ENCODE measurements at regions of chr13 and their contacts with region 1.

Region 1: GRCh38 chr13:42271337-42272114 is 426 bp upstream of the AKAP11 start:
- DNase-seq: peak; percentile 95
- H3K4me3 Mint-ChIP-seq: peak overlapping the region; percentile 94
- H3K27ac Mint-ChIP-seq: peak overlapping the region; percentile 88
- H3K4me1 Mint-ChIP-seq: peaks cover 46% of the 10 kb centered on the region
- H3K27me3 Mint-ChIP-seq: no peaks in the 10 kb centered on the region

Region 2: DNA sequence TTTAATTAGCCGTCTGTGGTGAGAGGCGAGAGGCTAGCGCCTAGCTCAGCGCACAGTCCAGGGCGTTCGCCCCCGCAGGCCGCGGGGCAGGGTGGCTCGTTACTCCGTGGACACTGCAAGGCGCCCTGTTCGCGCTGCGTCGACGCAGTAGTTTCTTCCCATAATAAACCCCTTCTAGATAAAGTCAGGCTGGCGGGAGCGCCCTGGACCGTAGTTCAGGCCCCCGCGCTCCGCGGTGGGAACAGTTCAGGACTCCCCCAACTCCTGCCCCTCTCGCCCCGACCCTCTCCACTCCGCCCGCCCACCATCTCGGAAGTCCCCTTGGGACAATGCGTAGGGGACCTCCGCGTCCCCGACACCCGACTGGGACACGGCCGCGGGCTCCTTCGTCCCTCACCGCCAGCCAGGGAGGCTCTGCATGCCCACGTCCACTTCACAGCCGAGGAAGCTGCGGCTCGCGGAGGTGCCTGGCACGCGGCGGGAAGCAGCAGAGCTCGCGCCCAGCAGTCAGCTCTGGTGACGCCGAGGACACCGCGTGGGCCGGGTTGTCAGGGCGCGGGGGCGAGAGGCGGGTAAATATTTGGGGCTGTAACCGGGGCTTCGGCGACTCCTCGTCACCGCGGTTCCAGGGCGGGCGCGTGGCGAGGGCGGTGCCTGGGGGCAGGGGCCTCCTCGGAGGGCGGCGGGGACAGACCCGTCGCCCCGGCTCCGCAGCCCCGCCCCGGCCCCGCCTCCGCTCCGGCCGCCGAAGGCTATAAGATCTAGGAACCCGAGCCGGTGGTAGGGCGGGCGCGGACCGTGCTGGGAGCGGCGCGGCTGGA is 814.5 kb before region 1 on chr13 and contains the start of gene RGCC:
- CTCF ChIA-PET with region 1: no interaction called
- intact Hi-C with region 1: loop called (anchors 2 kb)
- DNase-seq: peak; percentile 94
- H3K4me3 Mint-ChIP-seq: peak within 1 kb of the TSS; percentile 85
- H3K27ac Mint-ChIP-seq: peak within 1 kb of the TSS; percentile 96
- H3K4me1 Mint-ChIP-seq: peaks cover 26% of the 10 kb centered on the region
- H3K27me3 Mint-ChIP-seq: peaks cover 8% of the 10 kb centered on the region
- total RNA-seq, gene RGCC: 75.0 to 77.8 TPM

Region 3: GRCh38 chr13:42328672-42329071 is 57.1 kb after region 1 on chr13:
- CTCF ChIA-PET with region 1: no interaction called
- intact Hi-C with region 1: loop called (anchors 2 kb)
- DNase-seq: no peak
- H3K4me3 Mint-ChIP-seq: no peak overlapping the region
- H3K27ac Mint-ChIP-seq: peak overlapping the region; percentile 10
- H3K4me1 Mint-ChIP-seq: peaks cover 21% of the 10 kb centered on the region
- H3K27me3 Mint-ChIP-seq: no peaks in the 10 kb centered on the region

Region 4: DNA sequence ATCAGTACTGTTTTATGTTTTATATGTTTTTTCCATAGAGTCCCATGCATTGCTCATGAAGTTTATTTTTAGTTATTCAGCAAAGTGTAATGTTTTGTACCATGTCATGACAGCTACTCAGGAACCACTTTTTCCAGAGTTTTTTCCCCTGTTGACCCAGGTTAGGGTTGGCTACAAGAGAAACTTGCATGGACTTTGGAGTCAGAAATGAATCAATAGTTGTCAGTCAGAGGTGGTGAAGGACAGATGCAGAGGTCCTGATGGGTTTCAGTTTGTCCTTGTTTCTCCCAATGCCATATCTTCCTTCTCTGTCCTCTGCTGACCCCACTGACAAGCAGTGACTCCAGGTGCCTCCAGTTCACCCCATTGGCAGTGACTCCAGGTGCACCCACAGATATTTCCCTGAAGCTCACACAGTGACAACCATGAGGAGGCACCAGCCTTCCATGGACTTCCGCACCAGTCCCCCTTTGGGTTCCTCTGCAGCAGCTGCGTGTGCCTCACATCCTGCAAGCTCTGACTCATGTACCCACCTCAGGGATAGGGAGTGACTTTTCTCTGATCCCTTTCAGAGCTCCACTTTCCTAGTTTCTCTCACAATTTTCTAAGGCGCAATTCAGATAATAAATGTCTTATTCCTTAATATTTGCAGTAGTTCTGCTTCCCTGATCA is 92.6 kb after region 1 on chr13:
- CTCF ChIA-PET with region 1: no interaction called
- intact Hi-C with region 1: no loop called
- DNase-seq: no peak
- H3K4me3 Mint-ChIP-seq: no peak overlapping the region
- H3K27ac Mint-ChIP-seq: no peak overlapping the region
- H3K4me1 Mint-ChIP-seq: peaks cover 25% of the 10 kb centered on the region
- H3K27me3 Mint-ChIP-seq: no peaks in the 10 kb centered on the region

Region 5: GRCh38 chr13:42392716-42393572 is 121.4 kb after region 1 on chr13:
- CTCF ChIA-PET with region 1: interaction called, 3 read pairs
- intact Hi-C with region 1: loop called (anchors 2 kb)
- DNase-seq: peak; percentile 58
- H3K4me3 Mint-ChIP-seq: peak overlapping the region; percentile 84
- H3K27ac Mint-ChIP-seq: peak overlapping the region; percentile 100
- H3K4me1 Mint-ChIP-seq: peaks cover 74% of the 10 kb centered on the region
- H3K27me3 Mint-ChIP-seq: no peaks in the 10 kb centered on the region

Region 6: GRCh38 chr13:42574435-42575311 is 303.1 kb after region 1 on chr13:
- CTCF ChIA-PET with region 1: no interaction called
- intact Hi-C with region 1: loop called (anchors 5 kb)
- DNase-seq: peak; percentile 62
- H3K4me3 Mint-ChIP-seq: peak overlapping the region; percentile 76
- H3K27ac Mint-ChIP-seq: peak overlapping the region; percentile 8
- H3K4me1 Mint-ChIP-seq: peaks cover 27% of the 10 kb centered on the region
- H3K27me3 Mint-ChIP-seq: peaks cover 27% of the 10 kb centered on the region